ENCODE measurements at regions of chr4 and their contacts with region 1.

Region 1: GRCh38 chr4:140252742-140253555 is 99.0 kb upstream of the MAML3 start:
- DNase-seq: peak; percentile 61
- H3K4me3 Mint-ChIP-seq: peak overlapping the region; percentile 58
- H3K27ac Mint-ChIP-seq: no peak overlapping the region
- H3K4me1 Mint-ChIP-seq: peaks cover 15% of the 10 kb centered on the region
- H3K27me3 Mint-ChIP-seq: peaks cover 31% of the 10 kb centered on the region

Region 2: DNA sequence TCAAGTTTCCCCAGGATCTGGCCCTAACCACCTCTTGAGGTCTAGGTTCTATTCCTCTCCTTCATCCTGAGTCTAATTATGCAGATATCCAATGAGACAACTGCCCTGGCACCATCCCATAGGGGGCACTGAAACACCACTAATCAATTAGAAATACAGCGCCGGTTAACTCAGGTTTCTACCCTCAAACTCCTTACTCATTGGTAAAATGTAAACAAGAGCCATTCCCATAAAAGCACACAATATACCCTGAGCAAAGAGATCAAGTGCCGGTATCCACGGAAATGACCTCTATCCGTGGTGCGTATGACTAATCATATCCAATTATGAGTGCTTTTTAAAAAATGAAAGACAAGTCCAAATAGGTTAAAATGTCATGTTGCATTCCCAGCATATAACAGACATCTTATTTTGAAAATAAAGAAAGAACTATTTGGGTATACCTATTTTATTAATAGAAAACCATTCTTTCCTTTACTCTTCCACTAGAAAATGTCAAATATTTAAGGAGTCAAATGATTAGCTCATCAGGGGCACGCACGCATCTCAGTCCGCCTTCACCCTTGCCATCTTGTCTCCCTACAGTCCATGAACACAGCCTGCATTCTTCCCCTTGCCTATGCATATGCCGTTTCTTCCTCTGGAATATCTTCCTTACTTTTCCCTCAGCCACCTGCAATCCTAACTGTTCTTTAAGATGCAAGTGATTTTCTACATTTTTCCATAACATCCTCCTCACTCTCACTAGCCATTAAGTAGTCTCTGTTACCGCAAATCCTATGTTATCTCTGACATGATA is 240.1 kb before region 1 on chr4:
- CTCF ChIA-PET with region 1: interaction called, 50 read pairs
- POLR2A ChIA-PET with region 1: interaction called, 3 read pairs
- DNase-seq: peak; percentile 60
- H3K4me3 Mint-ChIP-seq: no peak overlapping the region
- H3K27ac Mint-ChIP-seq: no peak overlapping the region
- H3K4me1 Mint-ChIP-seq: peaks cover 8% of the 10 kb centered on the region
- H3K27me3 Mint-ChIP-seq: peaks cover 34% of the 10 kb centered on the region

Region 3: DNA sequence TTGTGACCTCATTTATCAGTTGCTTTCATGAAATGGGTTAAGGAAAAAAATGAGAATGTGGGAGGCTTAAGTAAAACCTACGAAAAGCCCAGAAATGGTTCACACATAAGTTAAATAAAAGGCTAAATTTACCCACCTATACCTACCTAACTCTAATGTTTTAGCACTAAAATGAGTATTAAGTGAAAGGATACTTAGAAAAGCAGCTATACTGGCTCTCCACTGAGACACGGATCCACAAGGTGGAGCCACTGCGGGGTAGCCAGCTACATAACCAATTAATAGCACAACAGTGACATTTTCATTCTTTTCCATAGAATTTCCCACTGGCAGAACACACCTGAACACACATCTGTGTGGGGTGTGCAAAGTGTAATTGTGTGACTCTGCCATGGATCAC is 200.9 kb before region 1 on chr4:
- CTCF ChIA-PET with region 1: interaction called, 20 read pairs
- POLR2A ChIA-PET with region 1: no interaction called
- DNase-seq: peak; percentile 50
- H3K4me3 Mint-ChIP-seq: no peak overlapping the region
- H3K27ac Mint-ChIP-seq: no peak overlapping the region
- H3K4me1 Mint-ChIP-seq: peaks cover 39% of the 10 kb centered on the region
- H3K27me3 Mint-ChIP-seq: peaks cover 59% of the 10 kb centered on the region

Region 4: GRCh38 chr4:140158365-140159030 is 94.5 kb before region 1 on chr4:
- CTCF ChIA-PET with region 1: interaction called, 13 read pairs
- POLR2A ChIA-PET with region 1: interaction called, 3 read pairs
- DNase-seq: no peak
- H3K4me3 Mint-ChIP-seq: no peak overlapping the region
- H3K27ac Mint-ChIP-seq: no peak overlapping the region
- H3K4me1 Mint-ChIP-seq: peaks cover 33% of the 10 kb centered on the region
- H3K27me3 Mint-ChIP-seq: peaks cover 40% of the 10 kb centered on the region

Region 5: GRCh38 chr4:140233791-140234696 is 18.9 kb before region 1 on chr4:
- CTCF ChIA-PET with region 1: interaction called, 12 read pairs
- POLR2A ChIA-PET with region 1: interaction called, 4 read pairs
- DNase-seq: peak; percentile 19
- H3K4me3 Mint-ChIP-seq: peak overlapping the region; percentile 12
- H3K27ac Mint-ChIP-seq: peak overlapping the region; percentile 84
- H3K4me1 Mint-ChIP-seq: peaks cover 23% of the 10 kb centered on the region
- H3K27me3 Mint-ChIP-seq: peaks cover 11% of the 10 kb centered on the region

Region 6: DNA sequence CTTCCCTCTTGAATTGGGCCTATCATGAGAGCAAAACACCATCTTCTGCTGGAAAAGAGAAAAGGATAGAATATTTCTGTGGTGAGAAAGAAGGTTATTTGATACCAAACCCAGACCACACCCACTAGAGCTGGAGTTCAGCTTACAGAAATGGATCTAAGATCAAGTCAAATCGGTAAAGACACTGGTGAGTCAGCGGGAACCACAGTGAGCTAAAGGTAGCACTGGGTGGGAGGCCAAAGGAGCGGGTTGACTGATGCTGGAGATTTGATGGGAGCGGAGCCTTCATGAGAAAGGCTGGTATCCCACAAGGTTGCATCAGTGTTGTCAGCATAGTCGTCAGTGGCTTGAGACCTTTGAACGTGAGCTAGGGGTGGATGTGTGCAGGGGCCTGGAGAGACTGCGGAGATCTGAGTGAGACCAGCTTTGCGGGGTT is 14.1 kb after region 1 on chr4:
- CTCF ChIA-PET with region 1: interaction called, 15 read pairs
- POLR2A ChIA-PET with region 1: no interaction called
- DNase-seq: no peak
- H3K4me3 Mint-ChIP-seq: no peak overlapping the region
- H3K27ac Mint-ChIP-seq: no peak overlapping the region
- H3K4me1 Mint-ChIP-seq: peaks cover 5% of the 10 kb centered on the region
- H3K27me3 Mint-ChIP-seq: peaks cover 27% of the 10 kb centered on the region

Region 7: GRCh38 chr4:140277576-140277975 is 24.6 kb after region 1 on chr4:
- CTCF ChIA-PET with region 1: no interaction called
- POLR2A ChIA-PET with region 1: no interaction called
- DNase-seq: no peak
- H3K4me3 Mint-ChIP-seq: no peak overlapping the region
- H3K27ac Mint-ChIP-seq: no peak overlapping the region
- H3K4me1 Mint-ChIP-seq: no peaks in the 10 kb centered on the region
- H3K27me3 Mint-ChIP-seq: peaks cover 8% of the 10 kb centered on the region

Region 8: DNA sequence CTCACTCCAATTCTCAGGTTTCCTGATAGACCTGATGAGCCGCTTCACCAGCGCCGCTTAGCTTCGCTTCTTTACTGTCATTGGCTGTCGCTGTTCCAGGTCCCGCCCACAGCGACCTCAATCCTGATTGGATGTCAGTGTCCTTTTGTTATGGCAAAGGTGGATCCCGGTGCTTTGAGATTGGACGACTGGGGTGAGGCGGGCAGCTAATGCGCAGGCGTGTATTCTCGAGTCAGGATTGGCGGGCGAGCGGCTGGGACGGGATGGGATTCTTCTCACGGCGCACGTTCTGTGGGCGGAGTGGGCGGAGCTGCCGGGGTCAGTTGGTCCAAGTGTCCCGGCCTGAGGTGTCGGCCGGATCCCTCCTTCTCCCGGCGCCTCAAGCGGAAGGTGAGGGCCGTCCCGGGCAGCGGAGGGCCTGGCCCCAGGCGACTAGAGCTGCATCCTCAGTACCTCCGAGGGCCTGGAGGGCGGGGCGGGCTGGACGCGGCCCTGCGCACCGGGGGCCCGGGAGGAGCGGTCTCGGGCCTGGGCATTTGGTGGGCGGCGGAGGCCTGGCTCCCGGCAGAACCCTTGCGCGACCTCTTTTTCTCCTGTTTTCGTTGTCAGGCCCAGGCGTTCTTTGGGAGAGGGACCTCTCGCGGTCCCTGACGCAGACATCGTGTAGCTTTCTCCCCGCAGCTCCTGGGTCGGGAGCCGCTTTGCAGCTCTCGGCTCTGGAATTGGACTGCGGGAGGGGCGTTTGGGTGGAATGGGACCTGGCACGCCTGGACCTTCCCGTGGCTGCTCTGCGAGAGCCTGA is 120.6 kb after region 1 on chr4 and contains the start of gene SCOC:
- CTCF ChIA-PET with region 1: interaction called, 12 read pairs
- POLR2A ChIA-PET with region 1: no interaction called
- DNase-seq: peak; percentile 98
- H3K4me3 Mint-ChIP-seq: no peak within 1 kb of the TSS
- H3K27ac Mint-ChIP-seq: peak within 1 kb of the TSS; percentile 18
- H3K4me1 Mint-ChIP-seq: peaks cover 19% of the 10 kb centered on the region
- H3K27me3 Mint-ChIP-seq: peaks cover 2% of the 10 kb centered on the region
- total RNA-seq, gene SCOC: 24.5 to 25.0 TPM